ENCODE measurements at regions of chr1 and their contacts with region 1.

Region 1: GRCh38 chr1:192633533-192634253 is 2.3 kb upstream of the RGS13 start:
- DNase-seq: no peak
- H3K4me3 ChIP-seq: peak overlapping the region; percentile 80
- H3K27ac ChIP-seq: peak overlapping the region; percentile 100
- H3K4me1 ChIP-seq: peaks cover 66% of the 10 kb centered on the region
- CTCF ChIP-seq: no peak

Region 2: GRCh38 chr1:192158181-192158580 is 475.5 kb before region 1 on chr1 and contains the start of gene RGS18:
- CTCF ChIA-PET with region 1: no interaction called
- POLR2A ChIA-PET with region 1: interaction called, 4 read pairs
- intact Hi-C with region 1: loop called (anchors 2 kb)
- DNase-seq: peak; percentile 17
- H3K4me3 ChIP-seq: peak within 1 kb of the TSS; percentile 37
- H3K27ac ChIP-seq: peak within 1 kb of the TSS; percentile 17
- H3K4me1 ChIP-seq: no peaks in the 10 kb centered on the region
- CTCF ChIP-seq: no peak
- total RNA-seq, gene RGS18: not detected in 2 replicates

Region 3: DNA sequence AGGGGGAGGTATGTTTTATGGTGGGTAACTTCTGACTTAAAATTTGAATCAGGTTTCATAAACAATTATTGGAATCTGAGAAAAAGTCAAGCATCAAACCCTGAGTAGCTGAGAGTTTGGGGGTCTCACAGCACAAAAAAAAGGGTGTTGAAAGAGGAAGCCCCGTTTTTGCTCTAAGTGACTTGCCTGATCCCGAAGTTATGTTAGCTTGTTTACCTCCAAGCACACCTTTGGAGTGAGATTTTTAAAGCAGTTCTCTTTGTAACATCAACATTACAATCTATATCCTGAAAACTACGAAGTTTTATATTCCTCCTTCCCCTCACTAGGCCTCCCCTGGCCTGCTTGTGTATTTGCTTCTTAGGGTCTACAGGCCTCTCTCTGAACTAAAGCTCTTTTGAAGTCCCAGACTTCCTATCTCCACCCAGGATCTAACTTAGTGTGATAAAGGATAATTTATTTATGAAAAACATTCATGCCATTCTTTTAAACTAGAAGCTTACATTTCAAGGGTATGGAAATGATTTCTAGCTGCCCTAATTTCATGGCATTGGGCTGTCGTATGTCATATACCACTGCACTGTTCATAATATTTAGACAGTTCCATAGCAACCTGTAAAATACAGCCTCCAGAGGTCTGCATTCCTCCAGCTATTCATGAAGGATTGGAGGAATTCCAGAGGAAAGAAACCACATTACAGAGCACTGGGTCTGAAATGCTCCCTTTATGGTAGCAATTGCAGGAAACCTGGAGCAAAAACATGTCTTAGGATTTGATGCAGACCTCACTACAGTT is 94.2 kb before region 1 on chr1:
- CTCF ChIA-PET with region 1: no interaction called
- POLR2A ChIA-PET with region 1: interaction called, 29 read pairs
- intact Hi-C with region 1: loop called (anchors 2 kb)
- DNase-seq: no peak
- H3K4me3 ChIP-seq: peak overlapping the region; percentile 51
- H3K27ac ChIP-seq: peak overlapping the region; percentile 86
- H3K4me1 ChIP-seq: peaks cover 36% of the 10 kb centered on the region
- CTCF ChIP-seq: no peak